ENCODE measurements at regions of chr1 and their contacts with region 1.

Region 1: DNA sequence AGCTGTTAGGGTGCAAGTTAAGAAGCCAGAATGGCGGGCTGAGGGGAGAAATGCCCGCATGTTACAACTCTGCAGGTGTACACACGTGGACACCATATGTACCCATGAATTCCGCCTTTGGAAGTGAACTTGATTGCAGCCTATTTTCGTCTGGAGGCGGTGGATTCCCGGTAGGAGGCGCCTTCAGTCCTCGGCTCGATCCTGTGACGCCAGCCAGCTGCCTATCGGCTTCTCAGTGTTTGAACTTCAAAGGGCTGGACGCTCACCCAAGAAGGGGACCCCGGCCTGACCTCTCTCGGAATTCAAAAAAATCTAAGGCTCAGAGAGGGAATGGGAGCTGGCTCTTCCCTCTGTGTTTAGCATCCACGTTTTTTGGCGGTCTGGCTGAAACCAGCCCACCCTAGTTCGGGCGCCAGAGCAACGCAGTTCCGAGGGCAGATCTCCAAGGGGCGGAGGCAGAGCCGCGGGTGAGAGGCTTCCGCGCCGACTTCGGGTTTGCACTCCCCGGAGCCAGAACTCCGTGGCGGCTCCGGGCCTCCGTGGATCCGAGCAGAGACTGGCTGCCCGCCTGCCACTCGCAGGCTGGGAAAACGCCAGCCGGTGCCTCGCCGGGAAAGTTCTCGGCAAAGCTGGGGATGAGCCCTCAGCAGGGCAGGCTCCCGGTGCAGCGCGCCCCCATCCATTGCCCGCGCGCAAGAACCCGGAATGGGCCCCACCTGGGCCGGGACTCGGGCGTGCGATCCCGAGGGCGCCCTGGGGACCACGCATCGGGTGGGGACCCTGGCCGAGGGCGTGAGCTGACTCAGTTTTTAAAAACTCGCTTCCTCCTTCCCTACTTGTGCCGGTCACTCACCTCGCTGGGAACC is 996 bp upstream of the TMEM51 start:
- DNase-seq: peak; percentile 88
- ATAC-seq: peak; percentile 55
- H3K4me3 ChIP-seq: peak overlapping the region; percentile 69 to 83 (median 70)
- H3K27ac ChIP-seq: peak overlapping the region; percentile 69
- H3K4me1 ChIP-seq: peaks cover 79% of the 10 kb centered on the region
- H3K27me3 ChIP-seq: no peaks in the 10 kb centered on the region
- CTCF ChIP-seq: peak; percentile 82
- EP300 ChIP-seq: peak in 1 of 2 experiments; percentile 46; a peak in 3 of 4 replicates
- POLR2A ChIP-seq: peak; percentile 28 to 37; a peak in 2 of 4 replicates
- RAD21 ChIP-seq: peak; percentile 37; the same call in 1 of the 2 replicates

Region 2: DNA sequence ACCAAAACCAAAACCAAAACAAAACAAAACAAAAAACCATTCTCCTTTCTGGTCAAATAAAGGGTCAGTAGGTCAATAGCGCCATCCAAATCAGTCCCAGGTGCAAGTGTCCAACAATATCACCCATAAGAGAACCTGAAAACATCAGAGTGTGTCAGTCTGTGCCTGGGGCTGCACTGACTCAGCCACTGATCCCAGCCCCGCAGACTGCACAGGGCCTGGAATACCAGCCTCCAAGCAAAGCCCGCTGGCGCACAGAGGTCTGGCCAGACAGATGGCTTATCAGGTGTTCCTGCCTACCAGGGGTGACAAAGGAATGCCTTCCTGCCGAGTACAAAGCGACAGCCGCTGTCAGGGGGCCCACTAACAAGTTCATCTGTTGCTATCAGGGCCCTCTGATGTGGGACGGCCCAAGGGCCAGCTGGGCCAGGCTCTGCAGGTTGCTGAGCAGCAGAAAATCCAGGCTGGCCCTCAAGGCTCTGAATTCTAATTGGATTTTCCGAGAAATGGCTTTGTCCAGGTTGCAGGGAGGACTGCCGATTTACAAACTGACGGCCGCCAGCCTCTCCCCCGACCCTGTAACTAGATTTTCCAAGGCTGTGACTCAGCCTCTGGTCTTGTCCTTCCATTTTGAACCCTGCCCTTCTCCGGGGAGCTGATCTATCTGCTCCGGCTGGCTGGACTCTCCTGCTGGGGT is 12.7 kb before region 1 on chr1:
- CTCF ChIA-PET with region 1: no interaction called
- POLR2A ChIA-PET with region 1: interaction called, 12 read pairs
- in situ Hi-C with region 1: no loop called
- intact Hi-C with region 1: loop called (anchors 1 kb)
- DNase-seq: peak; percentile 96
- ATAC-seq: peak; percentile 99
- H3K4me3 ChIP-seq: peak overlapping the region; percentile 26 to 57 (median 35); a peak in 5 of 6 replicates
- H3K27ac ChIP-seq: peak overlapping the region; percentile 52
- H3K4me1 ChIP-seq: peaks cover 66% of the 10 kb centered on the region
- H3K27me3 ChIP-seq: no peaks in the 10 kb centered on the region
- CTCF ChIP-seq: peak; percentile 30
- EP300 ChIP-seq: peak; percentile 58 to 77; a peak in 3 of 4 replicates
- POLR2A ChIP-seq: peak in 1 of 2 experiments; percentile 54; a peak in 1 of 4 replicates
- RAD21 ChIP-seq: peak; percentile 45; the same call in 1 of the 2 replicates

Region 3: DNA sequence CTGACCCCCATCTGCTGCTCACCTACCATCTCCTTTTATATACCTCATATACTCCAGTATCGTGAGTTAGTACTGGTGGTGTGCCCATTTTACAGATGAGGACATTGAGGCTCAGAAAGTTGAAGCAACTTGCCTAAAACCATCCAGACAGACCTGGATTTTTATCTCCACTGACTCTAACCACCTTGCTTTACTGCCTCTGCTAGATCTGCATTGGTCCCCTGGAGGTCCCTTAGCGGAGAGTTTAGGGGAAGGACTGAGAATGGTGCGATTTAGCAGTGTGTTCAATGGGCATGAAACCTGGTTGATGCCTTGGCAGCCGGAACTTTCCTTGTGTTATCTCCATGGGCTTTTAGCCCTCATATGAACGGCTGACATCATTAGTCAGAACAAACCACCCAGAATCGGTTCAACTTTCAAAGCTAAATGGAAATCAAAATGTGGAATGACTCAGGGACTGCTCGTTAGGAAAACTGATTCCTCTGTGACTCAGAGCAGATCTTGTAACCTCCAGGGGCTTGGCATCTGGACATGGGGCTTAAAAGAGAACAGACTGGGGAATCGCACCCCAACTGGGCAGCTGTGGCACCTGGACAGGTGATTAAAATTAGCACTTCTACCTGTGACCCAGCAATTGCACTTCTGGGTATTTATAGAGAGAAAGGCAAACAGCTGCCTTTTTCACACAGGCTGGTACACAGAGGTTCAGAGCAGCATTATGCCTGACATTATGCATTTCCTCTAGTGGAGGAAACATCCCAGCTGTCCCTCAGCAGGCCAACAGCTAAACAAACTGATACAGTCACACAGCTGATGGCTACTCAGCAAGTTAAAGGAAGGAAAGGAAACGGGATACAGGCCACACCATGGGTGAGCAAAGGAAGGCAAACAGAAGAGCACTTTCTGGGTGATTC is 26.3 kb after region 1 on chr1:
- CTCF ChIA-PET with region 1: no interaction called
- POLR2A ChIA-PET with region 1: interaction called, 33 read pairs
- in situ Hi-C with region 1: no loop called
- intact Hi-C with region 1: no loop called
- DNase-seq: no peak
- ATAC-seq: peak; percentile 30; the same call in 1 of the 3 replicates
- H3K4me3 ChIP-seq: no peak overlapping the region
- H3K27ac ChIP-seq: peak overlapping the region; percentile 16
- H3K4me1 ChIP-seq: peaks cover 93% of the 10 kb centered on the region
- H3K27me3 ChIP-seq: no peaks in the 10 kb centered on the region
- CTCF ChIP-seq: no peak
- EP300 ChIP-seq: no peak
- POLR2A ChIP-seq: no peak
- RAD21 ChIP-seq: no peak

Region 4: DNA sequence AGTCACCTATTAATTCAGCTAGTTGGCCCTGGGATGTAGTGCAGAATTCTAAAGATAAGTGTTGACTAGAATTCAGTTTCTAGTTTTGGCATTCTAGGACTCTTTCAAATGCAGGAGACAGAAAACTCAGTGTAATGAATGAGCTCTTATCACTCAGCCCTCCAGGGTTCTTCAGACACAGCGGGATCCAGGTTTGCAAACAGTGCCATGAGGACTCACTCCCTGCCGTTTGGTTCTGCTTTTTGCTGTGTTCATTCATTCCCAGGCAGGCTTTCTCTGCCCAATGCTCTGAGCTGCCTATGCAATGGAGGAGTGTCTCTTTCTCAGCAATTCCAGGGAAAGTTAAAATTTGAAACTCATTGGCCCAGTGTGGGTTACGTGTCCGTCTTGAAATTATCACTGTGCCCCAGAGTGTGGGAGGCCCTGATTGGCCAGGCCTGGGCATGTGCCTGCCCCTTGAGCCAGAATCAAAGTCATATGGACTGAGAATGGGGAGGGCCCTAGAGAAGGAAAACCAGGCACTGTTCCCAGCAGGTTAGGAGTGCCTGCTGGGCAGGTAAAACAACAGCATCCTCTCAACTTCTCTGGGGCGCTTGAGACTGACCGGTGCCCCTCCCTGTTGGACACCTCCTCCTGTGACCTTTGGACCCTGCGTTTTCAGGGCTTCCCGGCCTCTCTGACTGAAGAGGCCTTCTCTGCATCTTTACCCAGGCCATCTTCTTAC is 44.4 kb after region 1 on chr1:
- CTCF ChIA-PET with region 1: no interaction called
- POLR2A ChIA-PET with region 1: interaction called, 28 read pairs
- in situ Hi-C with region 1: no loop called
- intact Hi-C with region 1: loop called (anchors 2 kb)
- DNase-seq: no peak
- ATAC-seq: peak; percentile 42
- H3K4me3 ChIP-seq: peak overlapping the region in 1 of 3 experiments; percentile 37; a peak in 1 of 6 replicates
- H3K27ac ChIP-seq: peak overlapping the region; percentile 39
- H3K4me1 ChIP-seq: peaks cover 66% of the 10 kb centered on the region
- H3K27me3 ChIP-seq: no peaks in the 10 kb centered on the region
- CTCF ChIP-seq: no peak
- EP300 ChIP-seq: no peak; a peak in 1 of 4 replicates
- POLR2A ChIP-seq: no peak
- RAD21 ChIP-seq: no peak